Right cardiac atrium (tissue), 5 donors: ENCODE measurements at regions of chr7 and their contacts with region 1.

Region 1: DNA sequence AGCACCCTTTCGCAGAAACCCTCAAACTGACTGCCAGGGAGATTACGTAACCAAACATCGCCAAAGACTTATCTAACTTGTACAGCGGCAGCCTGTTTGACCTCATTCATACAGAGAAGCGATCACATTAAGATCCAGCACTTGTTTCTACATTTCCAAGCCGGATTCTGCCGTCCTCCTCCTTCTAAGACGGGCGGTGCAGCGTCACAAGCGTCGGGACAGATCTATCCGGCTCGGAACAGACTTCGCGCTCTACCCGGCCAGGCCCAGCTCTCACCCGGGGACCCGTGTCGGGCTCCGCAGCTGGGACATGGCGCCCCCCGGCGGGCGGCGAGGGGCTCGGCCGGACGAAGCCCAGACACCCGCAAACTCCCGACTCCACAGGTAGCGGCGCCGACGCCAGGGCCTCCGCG is 373 bp downstream of the H2AZ2 start:
- DNase-seq: peak; percentile 88 to 96 (median 95)
- ATAC-seq: peak; percentile 77 to 85
- H3K4me3 ChIP-seq: peak overlapping the region; percentile 92
- H3K27ac ChIP-seq: peak overlapping the region; percentile 97
- H3K4me1 ChIP-seq: no peaks in the 10 kb centered on the region
- H3K27me3 ChIP-seq: no peaks in the 10 kb centered on the region

Region 2: DNA sequence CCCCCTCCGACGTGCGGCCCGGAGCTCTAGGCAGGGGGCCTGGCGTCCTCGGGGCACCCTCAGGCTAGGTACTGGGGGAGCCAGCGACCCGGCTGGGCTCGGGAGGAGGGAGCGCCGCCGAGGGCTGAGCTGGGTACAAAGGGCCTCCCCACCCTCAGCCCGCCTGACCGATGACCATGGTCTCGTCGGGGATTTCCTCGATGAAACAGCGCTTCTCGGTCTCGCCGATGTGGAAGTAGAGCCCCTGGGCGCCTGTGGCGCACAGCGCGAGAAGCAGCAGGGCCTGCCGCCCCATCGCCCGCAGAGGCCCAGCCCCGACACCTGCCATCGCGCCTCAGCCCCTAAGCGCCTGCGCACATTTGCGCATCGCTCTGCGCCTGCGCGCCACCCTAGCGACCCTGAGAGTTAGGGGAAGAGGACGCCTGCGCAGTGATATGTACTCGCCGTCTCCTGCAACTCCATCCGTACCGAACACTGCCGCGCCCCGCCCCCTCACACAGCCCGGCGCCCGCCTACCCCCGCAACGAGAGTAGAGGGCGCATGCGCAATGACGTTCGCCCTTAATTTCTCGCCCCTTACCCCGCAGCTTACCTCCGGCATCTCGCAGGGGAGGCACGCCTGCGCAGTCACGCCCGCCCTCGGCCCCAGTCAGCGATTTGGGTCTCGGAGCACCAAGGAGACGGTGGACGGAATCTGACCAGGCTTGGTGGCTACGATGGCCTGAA is 265.5 kb before region 1 on chr7 and contains the start of gene TMED4:
- intact Hi-C with region 1: loop called (anchors 5 to 10 kb)
- DNase-seq: peak; percentile 100
- ATAC-seq: peak; percentile 98 to 99
- H3K4me3 ChIP-seq: peak within 1 kb of the TSS; percentile 65
- H3K27ac ChIP-seq: peak within 1 kb of the TSS; percentile 94
- H3K4me1 ChIP-seq: peaks cover 2% of the 10 kb centered on the region
- H3K27me3 ChIP-seq: no peaks in the 10 kb centered on the region
- total RNA-seq, gene TMED4: 63.2 to 75.2 (median 66.6) TPM

Region 3: GRCh38 chr7:44587843-44588711 is 259.4 kb before region 1 on chr7:
- intact Hi-C with region 1: loop called (anchors 5 to 10 kb)
- DNase-seq: no peak
- ATAC-seq: peak in 1 of 2 donors; percentile 66
- H3K4me3 ChIP-seq: no peak overlapping the region
- H3K27ac ChIP-seq: no peak overlapping the region
- H3K4me1 ChIP-seq: peaks cover 2% of the 10 kb centered on the region
- H3K27me3 ChIP-seq: no peaks in the 10 kb centered on the region

Region 4: GRCh38 chr7:44797329-44798251 is 49.9 kb before region 1 on chr7:
- intact Hi-C with region 1: loop called in 1 of 4 experiments (anchors 5 kb)
- DNase-seq: peak; percentile 91 to 96 (median 95)
- ATAC-seq: peak; percentile 82 to 84
- H3K4me3 ChIP-seq: peak overlapping the region; percentile 83
- H3K27ac ChIP-seq: peak overlapping the region; percentile 99
- H3K4me1 ChIP-seq: no peaks in the 10 kb centered on the region
- H3K27me3 ChIP-seq: no peaks in the 10 kb centered on the region

Region 5: DNA sequence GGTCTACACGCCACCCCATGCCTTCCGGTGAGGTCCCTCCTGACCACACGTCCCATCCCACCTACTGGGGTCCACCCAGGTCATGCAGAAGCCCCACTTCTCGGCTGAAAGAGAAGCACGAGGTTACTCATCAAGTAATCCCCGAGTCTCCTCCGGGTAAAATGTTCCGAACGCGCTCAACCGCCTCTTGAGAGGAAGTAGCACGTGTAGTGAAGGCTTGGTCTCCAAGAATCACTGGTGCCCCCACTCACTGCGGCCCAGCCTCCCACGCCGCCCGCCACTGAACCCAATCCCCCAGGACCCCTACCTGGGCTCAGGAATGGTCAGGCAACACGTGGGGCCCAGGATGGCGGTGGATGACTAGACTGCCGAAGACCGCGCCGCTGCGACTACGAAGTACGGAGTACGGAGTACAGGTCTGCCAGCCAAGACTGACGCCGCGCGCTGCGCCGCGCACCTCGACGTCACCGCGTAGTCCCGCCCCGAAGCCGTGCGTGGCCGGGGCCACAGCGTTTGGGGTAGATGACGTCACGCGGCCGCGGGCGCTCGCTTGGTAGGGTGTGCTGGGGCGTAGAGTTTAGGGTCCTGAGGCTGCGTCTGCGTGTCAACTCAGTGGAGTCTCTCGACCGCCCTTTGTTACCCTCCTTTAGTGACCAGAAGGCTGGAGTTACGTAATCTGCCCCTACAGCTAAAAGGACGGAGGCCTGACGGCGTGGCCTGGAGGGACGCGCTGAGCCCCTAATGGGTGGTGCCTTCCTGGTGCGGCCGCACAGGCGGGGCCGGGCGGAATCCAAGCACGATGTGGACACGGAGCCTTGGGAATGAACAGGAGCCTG is 138.9 kb after region 1 on chr7:
- intact Hi-C with region 1: no loop called
- DNase-seq: peak; percentile 96 to 98 (median 98)
- ATAC-seq: peak; percentile 97 to 98
- H3K4me3 ChIP-seq: peak overlapping the region; percentile 28
- H3K27ac ChIP-seq: peak overlapping the region; percentile 79
- H3K4me1 ChIP-seq: peaks cover 2% of the 10 kb centered on the region
- H3K27me3 ChIP-seq: no peaks in the 10 kb centered on the region

Region 6: GRCh38 chr7:45089341-45089891 is 241.9 kb after region 1 on chr7:
- intact Hi-C with region 1: no loop called
- DNase-seq: peak; percentile 64 to 82 (median 81)
- ATAC-seq: peak; percentile 35 to 55
- H3K4me3 ChIP-seq: peak overlapping the region; percentile 59
- H3K27ac ChIP-seq: no peak overlapping the region
- H3K4me1 ChIP-seq: no peaks in the 10 kb centered on the region
- H3K27me3 ChIP-seq: no peaks in the 10 kb centered on the region

Region 7: DNA sequence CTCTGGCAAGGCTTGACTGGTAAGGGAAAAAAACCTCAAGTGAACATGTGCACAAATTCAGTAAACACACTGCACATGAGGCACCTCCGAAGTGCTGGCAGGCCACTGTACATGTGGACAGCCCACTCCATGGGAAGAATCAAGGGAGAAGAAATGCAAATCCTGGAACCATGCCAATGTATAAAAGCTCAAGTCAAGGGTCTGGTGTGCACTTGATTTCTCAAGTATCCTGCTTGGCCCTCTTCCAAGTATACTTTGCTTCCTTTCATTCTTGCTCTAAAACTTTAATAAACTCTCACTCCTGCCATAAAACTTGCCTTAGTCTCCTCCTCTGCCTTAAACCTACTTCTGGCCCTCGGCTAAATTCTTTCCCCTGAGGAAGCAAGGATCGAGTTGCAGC is 477.3 kb after region 1 on chr7:
- intact Hi-C with region 1: no loop called
- DNase-seq: no peak
- ATAC-seq: no peak
- H3K4me3 ChIP-seq: no peak overlapping the region
- H3K27ac ChIP-seq: no peak overlapping the region
- H3K4me1 ChIP-seq: no peaks in the 10 kb centered on the region
- H3K27me3 ChIP-seq: no peaks in the 10 kb centered on the region